ENCODE measurements at regions of chr2 and their contacts with region 1.

Region 1: GRCh38 chr2:160210599-160211138 is 10.6 kb upstream of the ITGB6 start:
- DNase-seq: peak; percentile 90
- H3K4me3 ChIP-seq: no peak overlapping the region
- H3K27ac ChIP-seq: no peak overlapping the region
- H3K4me1 ChIP-seq: peaks cover 3 to 46% (median 25%) of the 10 kb centered on the region in 6 donors
- H3K27me3 ChIP-seq: peaks cover 0 to 4% (median 0%) of the 10 kb centered on the region in 7 donors
- CTCF ChIP-seq: peak; percentile 51 to 87 (median 73)
- POLR2A ChIP-seq: no peak

Region 2: GRCh38 chr2:160109936-160110673 is 100.6 kb before region 1 on chr2:
- intact Hi-C with region 1: loop called (anchors 5 kb)
- DNase-seq: no peak
- H3K4me3 ChIP-seq: no peak overlapping the region
- H3K27ac ChIP-seq: no peak overlapping the region
- H3K4me1 ChIP-seq: peaks cover 0 to 4% (median 0%) of the 10 kb centered on the region in 6 donors
- H3K27me3 ChIP-seq: peaks cover 0 to 6% (median 0%) of the 10 kb centered on the region in 7 donors
- CTCF ChIP-seq: peak in 10 of 11 experiments; percentile 52 to 71 (median 62)
- POLR2A ChIP-seq: no peak

Measured in spleen (tissue), 13 donors.